Activated CD4-positive, alpha-beta T cell treated with anti-CD3 and anti-CD28 coated beads for 36 hours (primary cell): ENCODE measurements at regions of chr6 and their contacts with region 1.

Region 1: GRCh38 chr6:188821-189655 is 103.2 kb upstream of the DUSP22 start:
- DNase-seq: peak; percentile 92
- ATAC-seq: peak; percentile 78
- H3K4me3 Mint-ChIP-seq: no peak overlapping the region
- H3K27ac Mint-ChIP-seq: peak overlapping the region; percentile 95
- H3K4me1 Mint-ChIP-seq: peaks cover 52% of the 10 kb centered on the region
- H3K27me3 Mint-ChIP-seq: peaks cover 3% of the 10 kb centered on the region

Region 2: GRCh38 chr6:217048-217659 is 28.1 kb after region 1 on chr6:
- CTCF ChIA-PET with region 1: interaction called, 11 read pairs
- POLR2A ChIA-PET with region 1: interaction called, 6 read pairs
- intact Hi-C with region 1: loop called in 1 of 2 experiments (anchors 1 kb)
- DNase-seq: peak; percentile 68
- ATAC-seq: no peak
- H3K4me3 Mint-ChIP-seq: no peak overlapping the region
- H3K27ac Mint-ChIP-seq: peak overlapping the region; percentile 41
- H3K4me1 Mint-ChIP-seq: peaks cover 59% of the 10 kb centered on the region
- H3K27me3 Mint-ChIP-seq: peaks cover 11% of the 10 kb centered on the region

Region 3: GRCh38 chr6:235763-236360 is 46.8 kb after region 1 on chr6:
- CTCF ChIA-PET with region 1: interaction called, 5 read pairs
- POLR2A ChIA-PET with region 1: no interaction called
- intact Hi-C with region 1: loop called (anchors 1 kb)
- DNase-seq: peak; percentile 87
- ATAC-seq: peak; percentile 90
- H3K4me3 Mint-ChIP-seq: peak overlapping the region; percentile 44
- H3K27ac Mint-ChIP-seq: peak overlapping the region; percentile 80
- H3K4me1 Mint-ChIP-seq: peaks cover 51% of the 10 kb centered on the region
- H3K27me3 Mint-ChIP-seq: no peaks in the 10 kb centered on the region

Region 4: DNA sequence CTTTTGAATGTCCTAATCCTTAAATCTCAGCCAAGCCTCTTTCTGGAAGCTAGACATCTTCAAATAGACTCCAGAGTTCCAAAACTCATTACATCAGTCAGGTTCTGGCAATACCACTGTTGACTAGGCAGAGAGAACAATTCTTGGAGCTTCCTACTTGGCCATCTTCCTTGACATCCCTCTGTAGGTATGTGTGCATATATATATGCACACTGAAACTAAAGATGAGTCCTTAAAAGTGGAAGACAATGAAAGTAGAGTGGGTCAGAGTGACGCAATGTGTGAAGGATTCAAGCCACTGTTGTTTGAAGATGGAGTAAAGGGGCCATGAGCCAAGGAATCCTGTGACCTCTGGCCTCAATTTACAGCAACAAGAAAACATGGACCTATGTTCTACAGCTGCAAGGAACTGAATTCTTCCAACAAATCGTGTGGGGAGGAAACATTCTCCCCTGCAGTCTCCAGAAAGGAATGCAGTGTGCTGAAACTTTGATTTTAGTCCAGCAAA is 84.6 kb after region 1 on chr6:
- CTCF ChIA-PET with region 1: no interaction called
- POLR2A ChIA-PET with region 1: no interaction called
- intact Hi-C with region 1: loop called (anchors 2 kb)
- DNase-seq: no peak
- ATAC-seq: no peak
- H3K4me3 Mint-ChIP-seq: no peak overlapping the region
- H3K27ac Mint-ChIP-seq: no peak overlapping the region
- H3K4me1 Mint-ChIP-seq: peaks cover 24% of the 10 kb centered on the region
- H3K27me3 Mint-ChIP-seq: no peaks in the 10 kb centered on the region

Region 5: GRCh38 chr6:336159-337019 is 147.4 kb after region 1 on chr6:
- CTCF ChIA-PET with region 1: no interaction called
- POLR2A ChIA-PET with region 1: no interaction called
- intact Hi-C with region 1: loop called (anchors 1 to 2 kb)
- DNase-seq: no peak
- ATAC-seq: peak; percentile 30
- H3K4me3 Mint-ChIP-seq: no peak overlapping the region
- H3K27ac Mint-ChIP-seq: no peak overlapping the region
- H3K4me1 Mint-ChIP-seq: peaks cover 48% of the 10 kb centered on the region
- H3K27me3 Mint-ChIP-seq: no peaks in the 10 kb centered on the region

Region 6: DNA sequence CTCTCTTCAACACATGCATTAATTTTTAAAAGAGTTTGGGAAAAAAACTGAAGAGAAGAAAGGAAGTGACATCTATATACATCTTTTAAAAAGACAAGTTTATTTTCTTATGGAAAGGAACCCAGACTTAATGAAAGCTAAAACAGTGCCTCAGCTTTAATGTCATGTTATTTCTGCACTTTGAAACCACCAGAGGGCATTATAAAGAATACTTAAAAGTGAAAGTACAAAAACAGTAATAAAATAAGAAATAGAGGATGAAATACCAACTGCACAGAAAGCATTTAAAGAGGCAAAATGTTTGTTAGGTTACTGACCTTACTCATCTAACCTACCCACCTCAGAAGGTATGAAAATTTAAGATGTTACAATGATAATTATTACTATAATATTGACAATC is 369.1 kb after region 1 on chr6:
- CTCF ChIA-PET with region 1: interaction called, 3 read pairs
- POLR2A ChIA-PET with region 1: no interaction called
- intact Hi-C with region 1: loop called in 1 of 2 experiments (anchors 2 kb)
- DNase-seq: no peak
- ATAC-seq: no peak
- H3K4me3 Mint-ChIP-seq: peak overlapping the region; percentile 15
- H3K27ac Mint-ChIP-seq: peak overlapping the region; percentile 90
- H3K4me1 Mint-ChIP-seq: peaks cover 63% of the 10 kb centered on the region
- H3K27me3 Mint-ChIP-seq: no peaks in the 10 kb centered on the region

Region 7: DNA sequence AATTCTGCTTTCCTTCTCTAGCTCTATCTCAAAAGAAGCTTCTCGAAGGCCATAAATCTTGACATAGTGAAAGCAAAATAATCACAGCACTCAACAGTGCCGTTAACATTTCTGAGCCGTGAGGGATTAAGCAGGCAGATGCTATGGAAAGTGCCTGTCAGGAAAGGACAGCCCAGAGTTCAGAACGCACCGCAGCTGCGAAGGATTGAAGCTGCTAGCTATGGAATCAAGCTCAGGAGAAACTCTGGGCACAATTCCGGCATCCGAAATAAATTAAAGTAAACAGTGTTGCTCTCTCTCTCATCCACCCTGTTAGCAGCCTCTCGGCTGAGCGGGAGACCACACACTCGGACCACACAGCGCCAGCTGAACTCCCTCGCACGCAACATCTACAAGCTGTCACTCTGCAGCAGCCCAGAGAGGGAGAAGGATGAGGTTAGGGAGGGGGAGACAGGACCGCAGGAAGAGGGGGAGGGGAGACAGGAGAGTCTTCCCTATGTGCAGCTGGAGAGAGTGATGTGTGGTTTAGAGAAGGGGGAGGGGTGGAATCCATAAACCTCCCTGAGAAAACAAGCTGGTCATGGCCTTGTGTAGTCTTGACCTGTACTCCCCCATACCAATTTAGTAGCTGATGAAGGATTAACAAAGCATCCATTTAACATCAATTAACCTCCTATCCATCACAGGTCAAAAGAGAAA is 494.9 kb after region 1 on chr6:
- CTCF ChIA-PET with region 1: no interaction called
- POLR2A ChIA-PET with region 1: no interaction called
- intact Hi-C with region 1: loop called in 1 of 2 experiments (anchors 1 kb)
- DNase-seq: peak; percentile 46
- ATAC-seq: peak; percentile 7
- H3K4me3 Mint-ChIP-seq: peak overlapping the region; percentile 38
- H3K27ac Mint-ChIP-seq: peak overlapping the region; percentile 61
- H3K4me1 Mint-ChIP-seq: peaks cover 53% of the 10 kb centered on the region
- H3K27me3 Mint-ChIP-seq: no peaks in the 10 kb centered on the region